H1 (cell line): ENCODE measurements at regions of chr1 and their contacts with region 1.

Region 1: GRCh38 chr1:185044981-185045813 is at the start of gene RNF2:
- DNase-seq: peak; percentile 47 to 88
- H3K4me3 ChIP-seq: peak within 1 kb of the TSS; percentile 70 to 93 (median 80)
- H3K27ac ChIP-seq: peak within 1 kb of the TSS; percentile 68
- H3K4me1 ChIP-seq: peaks cover 0 to 7% (median 2%) of the 10 kb centered on the region in 4 experiments; a peak in 3 of 7 replicates
- H3K27me3 ChIP-seq: peaks cover 0 to 9% (median 5%) of the 10 kb centered on the region in 4 experiments; a peak in 6 of 7 replicates
- CTCF ChIP-seq: no peak
- EP300 ChIP-seq: no peak
- POLR2A ChIP-seq: peak; percentile 64 to 72; a peak in 1 of 3 replicates
- RAD21 ChIP-seq: 0 out of 4 replicates have a peak, but pooled peaks of 1 of the 2 experiments have one; percentile 12
- total RNA-seq, gene RNF2: 52.7 and 58.9 TPM in 2 replicates

Region 2: DNA sequence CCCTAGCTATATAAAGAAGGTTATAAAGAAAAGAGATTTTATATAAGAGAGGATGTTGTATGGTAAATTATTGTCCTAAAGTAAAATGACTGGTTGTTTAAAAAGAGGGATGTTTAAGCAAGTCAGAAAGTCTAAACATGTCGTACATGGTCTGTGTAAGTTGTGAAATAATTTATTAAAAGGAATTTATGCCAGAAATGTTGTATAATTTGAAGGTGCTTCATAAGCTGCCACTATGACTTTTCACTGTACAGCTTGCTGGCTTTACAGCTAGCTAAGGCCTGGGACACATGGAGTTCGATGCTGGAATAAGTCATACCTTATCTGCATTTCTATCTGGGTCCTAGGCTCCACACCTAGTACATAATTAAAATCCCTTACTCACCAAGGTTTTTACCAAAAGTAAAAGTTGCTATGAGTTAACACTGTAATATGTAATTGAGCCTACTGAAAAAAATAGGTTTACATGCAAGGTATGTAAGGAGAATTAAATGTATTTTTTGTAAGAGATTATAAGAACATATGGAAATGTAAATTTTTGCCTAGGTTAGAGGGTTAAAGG is 231.6 kb before region 1 on chr1:
- CTCF ChIA-PET with region 1: no interaction called
- POLR2A ChIA-PET with region 1: no interaction called
- DNase-seq: no peak
- H3K4me3 ChIP-seq: no peak overlapping the region
- H3K27ac ChIP-seq: no peak overlapping the region
- H3K4me1 ChIP-seq: no peaks in the 10 kb centered on the region
- H3K27me3 ChIP-seq: no peaks in the 10 kb centered on the region
- CTCF ChIP-seq: no peak
- EP300 ChIP-seq: no peak
- POLR2A ChIP-seq: no peak
- RAD21 ChIP-seq: no peak

Region 3: GRCh38 chr1:184973272-184974055 is 71.7 kb before region 1 on chr1:
- CTCF ChIA-PET with region 1: interaction called, 3 read pairs
- POLR2A ChIA-PET with region 1: interaction called, 23 read pairs
- DNase-seq: peak in 1 of 2 experiments; percentile 77
- H3K4me3 ChIP-seq: peak overlapping the region; percentile 62 to 91 (median 72)
- H3K27ac ChIP-seq: no peak overlapping the region
- H3K4me1 ChIP-seq: peaks cover 0 to 5% (median 1%) of the 10 kb centered on the region in 4 experiments; a peak in 3 of 7 replicates
- H3K27me3 ChIP-seq: peaks cover 3 to 22% (median 14%) of the 10 kb centered on the region in 4 experiments
- CTCF ChIP-seq: no peak
- EP300 ChIP-seq: no peak
- POLR2A ChIP-seq: peak; percentile 39 to 47; a peak in 2 of 3 replicates
- RAD21 ChIP-seq: no peak

Region 4: GRCh38 chr1:185062710-185063370 is 17.6 kb after region 1 on chr1:
- CTCF ChIA-PET with region 1: interaction called, 6 read pairs
- POLR2A ChIA-PET with region 1: interaction called, 33 read pairs
- DNase-seq: no peak
- H3K4me3 ChIP-seq: no peak overlapping the region
- H3K27ac ChIP-seq: no peak overlapping the region
- H3K4me1 ChIP-seq: peaks cover 0 to 3% (median 0%) of the 10 kb centered on the region in 4 experiments; a peak in 2 of 7 replicates
- H3K27me3 ChIP-seq: peaks cover 0 to 1% (median 0%) of the 10 kb centered on the region in 4 experiments; a peak in 1 of 7 replicates
- CTCF ChIP-seq: no peak
- EP300 ChIP-seq: no peak
- POLR2A ChIP-seq: no peak
- RAD21 ChIP-seq: no peak

Region 5: DNA sequence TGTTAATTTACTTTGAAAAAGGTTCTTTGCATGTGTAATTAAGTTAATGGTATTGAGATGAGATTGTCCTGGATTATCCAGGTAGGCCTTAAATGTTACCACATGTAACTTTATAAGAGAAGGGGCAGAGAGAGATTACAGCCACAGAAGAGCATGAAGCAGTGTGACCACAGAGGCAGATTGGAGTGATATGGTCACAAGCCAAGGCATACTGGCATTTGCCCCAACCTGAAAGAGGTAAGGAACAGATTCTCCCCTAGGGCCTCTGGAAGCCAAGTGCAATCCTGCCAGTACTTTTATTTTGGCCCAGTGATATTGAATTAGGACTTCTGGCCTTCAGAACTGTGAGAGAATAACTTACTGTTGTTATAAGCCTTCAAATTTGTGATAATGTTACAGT is 23.1 kb after region 1 on chr1:
- CTCF ChIA-PET with region 1: interaction called, 6 read pairs
- POLR2A ChIA-PET with region 1: interaction called, 12 read pairs
- DNase-seq: no peak
- H3K4me3 ChIP-seq: no peak overlapping the region
- H3K27ac ChIP-seq: no peak overlapping the region
- H3K4me1 ChIP-seq: peaks cover 0 to 6% (median 4%) of the 10 kb centered on the region in 4 experiments; a peak in 4 of 7 replicates
- H3K27me3 ChIP-seq: no peaks in the 10 kb centered on the region
- CTCF ChIP-seq: no peak
- EP300 ChIP-seq: no peak
- POLR2A ChIP-seq: no peak
- RAD21 ChIP-seq: no peak

Region 6: DNA sequence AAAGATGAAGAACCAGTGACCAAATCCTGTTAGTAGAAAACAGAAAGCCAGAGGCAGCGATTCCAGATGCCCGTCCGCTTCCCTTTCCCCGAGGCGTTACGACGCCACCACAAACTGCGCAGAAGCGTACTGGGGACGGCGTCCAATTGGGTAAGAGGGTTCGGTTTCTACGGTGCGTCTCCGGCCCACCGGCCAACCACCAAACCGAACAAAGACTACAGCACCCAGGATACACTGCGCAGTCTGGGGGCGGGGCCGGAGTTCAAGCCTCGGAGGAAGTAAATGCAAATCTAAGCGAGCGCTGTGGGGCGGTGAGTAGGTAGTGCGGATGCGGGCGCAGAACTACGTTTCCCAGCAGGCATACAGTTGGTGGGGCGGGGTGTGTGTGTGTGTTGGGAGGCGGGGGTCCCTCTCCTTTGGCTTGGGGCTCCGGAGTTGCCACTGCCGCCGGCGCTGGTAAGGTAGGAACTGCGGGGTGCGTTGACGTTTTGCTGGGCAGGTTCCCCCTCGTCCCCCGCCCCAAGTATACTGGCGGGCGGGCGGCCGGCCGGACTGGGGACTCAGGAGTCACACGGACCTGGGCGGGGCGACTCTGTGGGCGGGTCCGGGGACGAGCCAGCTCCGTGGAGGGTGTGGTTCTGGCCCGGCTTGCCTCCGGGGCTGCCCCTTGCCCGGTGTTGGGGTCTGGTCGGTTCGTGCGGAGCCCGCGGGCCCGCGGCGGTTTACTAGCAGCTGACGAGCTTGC is 111.8 kb after region 1 on chr1 and contains the starts of genes SWT1 and TRMT1L:
- CTCF ChIA-PET with region 1: interaction called, 7 read pairs
- POLR2A ChIA-PET with region 1: interaction called, 16 read pairs
- DNase-seq: peak; percentile 96 to 98
- H3K4me3 ChIP-seq: peak within 1 kb of the TSS; percentile 85 to 97 (median 87)
- H3K27ac ChIP-seq: peak within 1 kb of the TSS; percentile 92
- H3K4me1 ChIP-seq: no peaks in the 10 kb centered on the region; a peak in 3 of 7 replicates
- H3K27me3 ChIP-seq: no peaks in the 10 kb centered on the region
- CTCF ChIP-seq: no peak
- EP300 ChIP-seq: no peak
- POLR2A ChIP-seq: peak; percentile 88 to 94
- RAD21 ChIP-seq: no peak
- total RNA-seq, gene SWT1: 6.2 and 8.1 TPM in 2 replicates
- total RNA-seq, gene TRMT1L: 22.3 and 22.5 TPM in 2 replicates